Heart right ventricle (tissue), 16 donors: ENCODE measurements at regions of chr14 and their contacts with region 1.

Region 1: GRCh38 chr14:38737686-38738407 is 365.2 kb downstream of the SEC23A start:
- DNase-seq: no peak
- ATAC-seq: no peak
- H3K4me3 ChIP-seq: no peak overlapping the region
- H3K27ac ChIP-seq: no peak overlapping the region
- H3K4me1 ChIP-seq: no peaks in the 10 kb centered on the region
- H3K27me3 ChIP-seq: no peaks in the 10 kb centered on the region
- CTCF ChIP-seq: no peak

Region 2: DNA sequence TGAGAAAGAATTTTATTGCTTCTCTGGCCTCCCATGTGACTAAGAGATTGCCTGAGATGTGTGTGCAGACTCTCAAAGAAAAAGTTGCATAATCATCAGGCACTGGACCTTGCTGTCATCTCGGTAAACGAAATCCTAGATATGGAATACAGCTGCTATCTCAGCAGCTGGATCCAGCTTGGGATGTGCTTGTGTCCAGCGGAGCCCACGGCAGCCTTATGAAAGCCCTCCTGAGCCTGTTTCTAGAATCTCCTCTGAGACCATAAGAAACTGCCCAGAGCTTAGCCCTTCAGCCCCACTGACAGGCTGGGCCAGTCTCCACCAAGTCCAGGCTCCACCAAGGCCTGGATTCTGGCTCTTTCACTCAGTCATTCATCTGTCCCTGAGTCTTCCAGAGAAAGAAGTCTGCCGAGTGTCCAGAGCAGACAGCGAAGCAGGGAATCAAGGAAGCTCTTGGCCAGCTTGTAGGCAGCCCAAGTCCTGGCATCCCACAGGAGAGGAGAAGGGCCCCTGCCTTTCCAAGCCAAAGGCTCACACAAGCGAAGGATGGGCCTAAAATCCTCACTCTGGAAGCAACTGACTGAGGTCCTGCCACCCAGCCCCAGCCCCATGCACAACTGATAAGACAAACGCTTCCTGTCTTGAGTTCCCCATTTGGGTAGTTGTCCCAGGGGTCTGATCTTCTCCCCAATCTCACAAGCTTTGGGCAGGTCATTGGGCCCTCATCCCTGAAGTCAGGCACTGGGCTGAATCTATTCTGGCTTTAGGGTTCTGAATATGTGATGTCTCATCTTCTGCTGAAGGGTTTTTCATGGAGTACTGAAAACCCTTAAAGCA is 267.4 kb after region 1 on chr14:
- intact Hi-C with region 1: loop called in 1 of 10 experiments (anchors 10 kb)
- DNase-seq: no peak
- ATAC-seq: peak; percentile 73 to 94 (median 82)
- H3K4me3 ChIP-seq: no peak overlapping the region
- H3K27ac ChIP-seq: no peak overlapping the region
- H3K4me1 ChIP-seq: peaks cover 0 to 12% (median 0%) of the 10 kb centered on the region in 9 donors
- H3K27me3 ChIP-seq: no peaks in the 10 kb centered on the region
- CTCF ChIP-seq: no peak